ENCODE measurements at regions of chr21 and their contacts with region 1.

Region 1: GRCh38 chr21:25862596-25862995 is 127.8 kb downstream of the GABPA start:
- DNase-seq: peak; percentile 19
- H3K4me3 ChIP-seq: no peak overlapping the region
- H3K27ac ChIP-seq: no peak overlapping the region
- H3K4me1 ChIP-seq: no peaks in the 10 kb centered on the region
- H3K27me3 ChIP-seq: no peaks in the 10 kb centered on the region
- CTCF ChIP-seq: peak; percentile 94 to 98

Region 2: DNA sequence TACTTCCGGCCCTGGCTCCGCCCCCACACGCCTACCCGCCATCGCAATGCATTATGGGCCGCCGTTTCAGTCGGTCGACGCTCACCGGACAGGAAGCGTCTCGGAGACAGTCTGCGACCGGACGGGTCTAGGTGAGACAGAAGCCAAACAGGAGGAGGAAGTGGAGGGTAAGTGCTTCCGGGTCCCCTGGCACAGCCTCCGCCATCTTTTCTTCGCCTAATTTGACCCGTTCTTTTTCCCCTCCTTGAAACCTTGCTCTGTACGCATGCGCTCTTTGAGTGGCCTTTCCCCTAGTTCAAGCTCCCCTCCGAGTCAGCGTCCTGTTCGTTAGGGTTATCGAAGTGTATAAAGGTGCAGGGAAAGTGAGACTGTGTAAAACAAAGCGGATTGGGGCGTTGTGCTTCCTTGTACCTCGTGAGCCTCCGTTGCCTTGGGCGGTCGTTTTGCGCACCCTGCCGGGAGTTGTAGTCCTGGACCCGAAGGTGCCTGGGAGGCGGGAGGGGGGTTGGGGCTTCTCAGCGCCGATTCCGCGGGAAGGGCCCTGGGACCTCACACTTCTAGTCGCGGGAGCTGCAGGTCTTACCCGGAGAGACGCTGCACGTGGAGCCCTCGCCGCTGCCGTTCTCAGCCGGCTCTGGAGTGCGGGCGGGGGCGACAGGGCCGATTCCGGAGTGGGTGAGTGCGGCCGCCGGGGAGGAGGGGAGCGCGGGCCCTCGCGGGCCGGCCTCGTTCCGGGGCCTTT is 127.5 kb before region 1 on chr21 and contains the starts of genes ATP5PF and GABPA:
- CTCF ChIA-PET with region 1: no interaction called
- dilution Hi-C with region 1: no loop called
- in situ Hi-C with region 1: no loop called
- intact Hi-C with region 1: loop called (anchors 1 kb)
- DNase-seq: peak; percentile 99
- H3K4me3 ChIP-seq: peak within 1 kb of the TSS; percentile 82 to 94 (median 91)
- H3K27ac ChIP-seq: peak within 1 kb of the TSS; percentile 89
- H3K4me1 ChIP-seq: peaks cover 13% of the 10 kb centered on the region
- H3K27me3 ChIP-seq: no peaks in the 10 kb centered on the region
- CTCF ChIP-seq: peak in 1 of 2 donors; percentile 28
- total RNA-seq, gene ATP5PF: 27.2 to 122 TPM
- total RNA-seq, gene GABPA: 13.3 to 17.3 TPM

Region 3: DNA sequence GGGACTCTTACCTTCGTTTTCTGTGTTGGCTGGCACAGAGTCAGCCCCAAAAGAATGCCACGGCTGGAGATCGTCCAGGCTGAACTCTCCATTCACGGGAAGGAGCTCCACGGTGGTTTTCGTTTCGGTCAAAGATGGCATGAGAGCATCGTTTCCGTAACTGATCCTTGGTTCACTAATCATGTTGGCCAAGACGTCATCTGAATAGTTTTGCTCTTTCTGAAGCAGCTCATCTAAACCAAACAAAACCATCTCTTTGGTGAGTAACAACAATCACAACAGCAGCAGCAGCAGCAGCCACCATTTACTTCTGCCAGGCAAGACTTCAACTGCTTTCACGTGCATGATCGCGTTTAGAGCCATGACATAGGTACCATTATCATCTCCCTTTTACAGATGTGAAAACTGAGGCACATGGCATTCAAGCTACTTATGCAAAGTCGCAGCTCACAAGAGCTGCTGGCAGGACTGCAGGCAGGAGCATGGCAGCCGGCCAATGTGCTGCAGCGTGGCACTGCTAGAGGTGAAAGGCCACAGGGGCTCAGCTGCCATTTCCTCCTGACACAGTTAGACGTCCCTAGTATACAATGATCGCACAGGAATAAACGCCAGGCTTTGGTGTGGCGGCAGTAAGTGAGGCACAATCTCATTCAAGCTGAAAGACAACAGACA is 49.3 kb after region 1 on chr21:
- CTCF ChIA-PET with region 1: no interaction called
- dilution Hi-C with region 1: no loop called
- in situ Hi-C with region 1: no loop called
- intact Hi-C with region 1: no loop called
- DNase-seq: no peak
- H3K4me3 ChIP-seq: no peak overlapping the region
- H3K27ac ChIP-seq: no peak overlapping the region
- H3K4me1 ChIP-seq: peaks cover 4% of the 10 kb centered on the region
- H3K27me3 ChIP-seq: no peaks in the 10 kb centered on the region
- CTCF ChIP-seq: no peak